ENCODE measurements at regions of chr2 and their contacts with region 1.

Region 1: DNA sequence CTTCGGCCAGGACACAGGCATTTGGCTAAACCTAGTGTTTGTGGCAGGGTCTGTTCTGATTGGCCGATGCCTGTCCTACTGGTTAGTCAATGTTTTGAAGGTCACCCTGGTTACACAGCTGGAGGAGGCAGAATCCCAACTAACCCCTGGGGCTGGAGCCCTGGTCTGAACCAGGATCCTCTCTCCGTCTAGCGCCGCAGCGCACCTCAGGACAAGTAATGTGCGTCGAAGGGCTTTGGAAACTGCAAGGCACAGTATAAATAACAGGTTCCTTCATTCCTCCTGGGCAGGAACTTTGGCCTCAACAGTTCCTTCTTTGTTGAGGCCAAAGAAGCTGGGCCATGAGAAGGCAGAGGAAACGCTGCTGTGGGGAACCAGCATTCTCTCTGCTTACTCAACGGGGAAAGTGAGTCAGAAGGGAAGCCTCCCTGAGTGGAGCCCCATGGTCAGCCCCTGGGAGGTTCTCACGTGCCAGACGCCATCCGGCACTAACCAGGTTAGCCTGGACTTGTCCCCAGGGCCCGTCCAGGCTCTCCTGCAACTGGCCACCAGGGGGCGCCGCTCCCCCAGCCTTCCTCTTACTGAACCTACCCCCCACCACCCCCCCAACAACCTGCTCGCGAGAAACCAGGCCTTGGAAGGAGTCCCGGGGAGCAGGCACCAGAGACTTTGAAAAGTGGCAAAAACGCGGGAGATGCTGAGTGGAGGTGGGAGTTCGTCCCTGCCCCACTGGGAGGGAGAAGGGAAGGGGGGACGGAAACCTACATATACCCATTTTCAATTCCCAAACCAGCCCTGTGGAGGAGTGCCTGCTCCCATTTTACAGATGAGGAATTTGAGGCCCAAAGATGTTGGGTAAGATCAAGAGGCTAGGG is 19.8 kb downstream of the TEX44 start:
- DNase-seq: peak; percentile 96
- ATAC-seq: peak; percentile 69

Region 2: DNA sequence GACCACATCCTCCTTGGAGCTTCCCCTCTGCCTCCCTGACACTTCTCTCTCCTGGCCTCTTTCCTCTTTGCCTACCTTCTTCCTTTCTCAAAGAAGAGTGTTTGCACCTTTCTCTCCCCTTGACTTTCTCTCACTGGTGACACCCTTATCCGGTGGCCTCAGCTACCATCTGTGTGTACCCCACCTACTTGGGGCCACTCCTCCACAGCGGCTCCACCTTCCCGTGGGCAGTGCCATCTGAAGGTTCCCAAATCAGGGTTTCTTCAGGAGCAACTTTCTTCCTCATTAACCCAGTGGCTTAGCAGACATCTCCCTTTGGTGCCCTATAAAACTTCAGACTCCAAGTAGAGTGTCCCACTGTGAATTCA is 142.8 kb before region 1 on chr2:
- intact Hi-C with region 1: no loop called
- DNase-seq: no peak
- ATAC-seq: no peak

Region 3: DNA sequence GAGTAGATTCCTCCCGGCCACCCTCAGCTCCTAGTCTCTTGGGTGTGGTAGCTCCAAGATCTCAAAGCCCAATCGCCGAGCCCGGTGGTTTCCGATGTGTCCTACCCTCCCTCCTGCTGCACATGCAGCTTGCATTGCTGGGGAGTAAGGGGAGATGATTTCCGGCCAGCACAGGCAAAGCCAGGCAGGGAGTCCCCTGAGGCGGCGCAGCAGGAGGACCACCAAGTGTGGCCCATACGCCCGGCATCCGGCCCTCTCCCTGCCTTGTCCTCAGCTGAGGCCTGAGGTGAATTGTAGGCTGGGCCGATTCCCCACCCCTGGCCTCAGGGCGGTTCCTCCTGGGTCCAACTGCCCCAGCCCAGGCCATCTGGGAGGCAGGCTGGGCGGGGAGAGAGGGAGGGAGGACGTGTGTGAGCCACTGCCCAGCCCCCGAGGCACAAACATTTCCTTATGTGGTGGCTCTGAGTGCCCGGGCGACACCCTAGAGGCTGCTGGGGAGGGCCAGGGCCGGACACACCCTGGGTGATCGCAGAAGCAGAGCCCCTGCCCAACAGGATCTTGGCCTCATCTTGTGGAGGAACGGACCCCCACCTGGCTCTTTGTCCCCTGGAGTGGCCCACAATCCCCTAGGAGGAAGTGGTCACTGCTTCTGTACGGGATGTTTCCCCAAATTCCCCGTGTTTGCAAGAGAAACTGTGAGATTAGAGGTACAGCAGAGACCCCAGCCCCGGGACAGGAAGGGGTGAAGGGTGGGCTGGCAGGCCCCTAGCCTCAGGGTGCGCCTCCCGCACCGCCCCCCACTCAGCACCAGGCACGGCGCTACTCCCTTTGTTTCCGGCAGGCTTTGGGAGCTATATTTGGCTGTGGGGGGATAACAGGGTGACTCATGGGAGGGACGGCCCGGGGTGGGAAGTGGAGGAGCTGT is 54.0 kb after region 1 on chr2:
- intact Hi-C with region 1: loop called (anchors 5 kb)
- DNase-seq: peak; percentile 97
- ATAC-seq: peak; percentile 89

Region 4: GRCh38 chr2:231713730-231714430 is 101.5 kb after region 1 on chr2:
- intact Hi-C with region 1: loop called (anchors 2 kb)
- DNase-seq: peak; percentile 94
- ATAC-seq: peak; percentile 50

Measured in left ventricle myocardium superior (tissue), 1 donor.